Activated naive CD4-positive, alpha-beta T cell treated with anti-CD3 and anti-CD28 coated beads for 36 hours (primary cell): ENCODE measurements at regions of chr7 and their contacts with region 1.

Region 1: DNA sequence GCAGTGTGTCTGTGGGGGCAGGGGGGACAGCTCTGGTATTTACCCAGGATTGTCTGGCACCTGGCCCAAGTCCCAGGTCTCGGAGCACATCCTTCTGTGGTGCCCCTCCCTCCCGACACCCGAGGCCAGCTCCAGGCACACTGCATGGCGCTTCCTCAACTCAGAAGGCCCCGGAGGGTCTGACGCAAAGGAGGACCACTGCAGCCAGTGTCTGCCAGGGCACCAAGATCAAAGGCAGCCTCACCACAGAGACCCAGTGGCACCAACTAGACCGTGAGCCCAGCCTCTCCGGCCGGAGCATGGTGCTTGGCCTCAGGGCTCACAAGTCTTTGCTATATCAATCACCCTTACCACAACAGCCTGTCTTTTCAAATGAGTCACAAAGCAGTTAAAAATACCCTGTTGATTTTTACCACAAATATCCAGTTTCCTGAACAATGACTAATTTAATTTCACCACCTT is 99.3 kb upstream of the DDC start:
- DNase-seq: peak; percentile 47
- H3K4me3 Mint-ChIP-seq: no peak overlapping the region
- H3K27ac Mint-ChIP-seq: no peak overlapping the region
- H3K4me1 Mint-ChIP-seq: peaks cover 62% of the 10 kb centered on the region
- H3K27me3 Mint-ChIP-seq: no peaks in the 10 kb centered on the region

Region 2: DNA sequence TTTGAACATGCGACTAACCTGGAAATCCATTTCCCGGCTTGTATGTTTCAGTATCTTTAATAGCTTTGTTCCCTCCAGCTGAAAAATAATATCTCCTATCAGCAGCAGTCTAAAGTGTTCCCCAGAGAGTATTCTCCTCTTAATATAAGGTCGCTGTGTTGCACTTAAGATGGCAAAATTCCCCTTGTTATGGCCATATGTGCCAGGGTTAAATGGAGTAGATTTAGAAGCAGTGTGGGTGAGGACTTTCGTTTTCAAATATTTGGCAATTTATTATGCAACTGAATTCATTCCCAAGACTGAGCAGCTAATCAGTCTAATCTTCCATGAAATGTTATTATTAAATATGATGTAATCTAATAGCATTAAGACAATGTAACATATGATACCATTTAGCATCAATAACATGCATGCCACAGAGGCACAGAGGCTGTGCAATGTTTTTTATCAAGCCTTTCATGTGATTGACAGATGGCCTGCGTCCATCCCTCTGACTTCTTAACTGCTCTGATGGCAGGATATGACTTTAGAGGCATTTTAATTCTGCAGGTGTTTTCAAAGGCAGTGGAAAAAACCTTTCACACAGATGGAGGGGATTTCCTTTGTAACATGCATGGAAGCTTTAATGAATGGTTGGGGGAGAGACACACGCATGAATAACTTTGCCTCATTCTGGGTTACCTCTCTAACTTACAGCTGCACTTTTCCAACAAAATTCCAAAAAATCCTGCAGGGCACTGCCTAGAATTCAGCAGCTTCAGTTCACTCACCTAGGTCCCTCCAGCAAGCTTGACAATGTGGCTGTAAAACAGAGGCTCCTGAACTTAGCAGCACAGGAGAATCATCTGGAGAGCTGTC is 516.3 kb before region 1 on chr7:
- CTCF ChIA-PET with region 1: no interaction called
- intact Hi-C with region 1: loop called (anchors 5 kb)
- DNase-seq: peak; percentile 73
- H3K4me3 Mint-ChIP-seq: peak overlapping the region; percentile 34
- H3K27ac Mint-ChIP-seq: peak overlapping the region; percentile 91
- H3K4me1 Mint-ChIP-seq: peaks cover 91% of the 10 kb centered on the region
- H3K27me3 Mint-ChIP-seq: no peaks in the 10 kb centered on the region

Region 3: GRCh38 chr7:50182759-50183158 is 481.7 kb before region 1 on chr7:
- CTCF ChIA-PET with region 1: no interaction called
- intact Hi-C with region 1: no loop called
- DNase-seq: no peak
- H3K4me3 Mint-ChIP-seq: no peak overlapping the region
- H3K27ac Mint-ChIP-seq: no peak overlapping the region
- H3K4me1 Mint-ChIP-seq: no peaks in the 10 kb centered on the region
- H3K27me3 Mint-ChIP-seq: no peaks in the 10 kb centered on the region

Region 4: DNA sequence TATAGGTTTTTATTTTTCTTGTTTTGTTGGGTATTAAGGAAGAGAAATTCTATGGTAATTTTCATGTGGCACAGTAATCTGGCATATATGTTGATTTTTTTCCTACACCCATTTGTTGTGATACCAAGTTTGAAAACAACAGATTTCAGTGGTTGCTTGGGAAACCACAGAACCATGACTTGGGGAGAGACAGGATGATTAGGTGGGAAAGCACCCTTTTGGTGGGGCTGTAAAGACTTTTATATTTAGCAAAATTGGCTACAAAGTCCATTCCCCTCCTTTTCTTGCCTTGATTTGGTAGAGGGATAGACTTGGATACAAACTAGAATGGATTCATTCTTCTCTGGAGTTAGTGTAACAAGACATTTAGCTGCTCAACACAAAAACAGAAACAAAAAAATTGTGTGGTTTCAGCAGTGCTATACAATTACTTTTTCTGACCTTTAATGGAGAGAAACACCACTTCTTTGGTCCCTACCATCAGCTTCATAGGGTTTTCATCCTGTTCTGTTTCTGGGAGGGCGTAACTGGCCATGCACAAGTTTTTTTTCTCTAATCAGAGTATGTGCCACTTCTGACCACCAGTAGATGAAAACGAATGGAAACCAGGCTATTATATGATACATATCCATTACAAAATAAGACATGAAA is 267.0 kb before region 1 on chr7:
- CTCF ChIA-PET with region 1: no interaction called
- intact Hi-C with region 1: loop called (anchors 5 kb)
- DNase-seq: peak; percentile 60
- H3K4me3 Mint-ChIP-seq: no peak overlapping the region
- H3K27ac Mint-ChIP-seq: peak overlapping the region; percentile 78
- H3K4me1 Mint-ChIP-seq: peaks cover 81% of the 10 kb centered on the region
- H3K27me3 Mint-ChIP-seq: no peaks in the 10 kb centered on the region

Region 5: GRCh38 chr7:50610521-50611277 is 53.8 kb before region 1 on chr7:
- CTCF ChIA-PET with region 1: no interaction called
- intact Hi-C with region 1: loop called (anchors 1 kb)
- DNase-seq: peak; percentile 80
- H3K4me3 Mint-ChIP-seq: no peak overlapping the region
- H3K27ac Mint-ChIP-seq: no peak overlapping the region
- H3K4me1 Mint-ChIP-seq: peaks cover 26% of the 10 kb centered on the region
- H3K27me3 Mint-ChIP-seq: no peaks in the 10 kb centered on the region

Region 6: DNA sequence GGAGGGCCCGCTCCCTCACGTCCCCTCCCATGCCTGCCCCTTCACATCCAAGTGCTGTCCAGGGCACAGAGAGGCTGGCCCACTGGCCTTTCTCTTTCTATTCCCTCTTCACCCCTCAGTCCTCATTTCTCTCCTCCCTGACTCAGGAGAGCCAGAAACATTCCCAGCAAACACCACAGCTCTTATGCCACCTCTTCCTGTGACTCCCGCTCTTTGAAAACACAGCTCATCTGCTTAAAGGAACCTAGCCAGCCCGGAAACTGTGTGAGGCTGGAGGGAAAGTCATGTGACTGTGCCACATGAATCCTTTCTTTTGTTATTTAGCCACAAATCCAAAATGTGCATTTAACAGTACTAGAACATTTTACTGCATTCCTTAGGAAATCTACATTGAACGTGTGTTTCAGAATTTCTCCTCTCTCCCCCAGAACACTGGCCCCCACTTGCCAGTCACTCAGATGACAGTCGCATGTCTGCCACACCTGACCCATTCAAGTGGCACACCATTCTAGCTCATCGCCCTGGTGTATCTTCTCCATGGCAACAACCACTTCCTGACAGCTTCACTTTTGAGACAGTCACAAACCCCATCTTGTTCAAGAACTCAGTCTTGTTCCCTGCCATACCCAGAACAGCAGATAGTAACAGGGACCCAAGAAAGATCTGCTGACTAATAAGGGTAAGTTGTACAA is 75.4 kb after region 1 on chr7:
- CTCF ChIA-PET with region 1: no interaction called
- intact Hi-C with region 1: loop called (anchors 5 kb)
- DNase-seq: peak; percentile 84
- H3K4me3 Mint-ChIP-seq: peak overlapping the region; percentile 59
- H3K27ac Mint-ChIP-seq: peak overlapping the region; percentile 84
- H3K4me1 Mint-ChIP-seq: peaks cover 34% of the 10 kb centered on the region
- H3K27me3 Mint-ChIP-seq: no peaks in the 10 kb centered on the region

Region 7: DNA sequence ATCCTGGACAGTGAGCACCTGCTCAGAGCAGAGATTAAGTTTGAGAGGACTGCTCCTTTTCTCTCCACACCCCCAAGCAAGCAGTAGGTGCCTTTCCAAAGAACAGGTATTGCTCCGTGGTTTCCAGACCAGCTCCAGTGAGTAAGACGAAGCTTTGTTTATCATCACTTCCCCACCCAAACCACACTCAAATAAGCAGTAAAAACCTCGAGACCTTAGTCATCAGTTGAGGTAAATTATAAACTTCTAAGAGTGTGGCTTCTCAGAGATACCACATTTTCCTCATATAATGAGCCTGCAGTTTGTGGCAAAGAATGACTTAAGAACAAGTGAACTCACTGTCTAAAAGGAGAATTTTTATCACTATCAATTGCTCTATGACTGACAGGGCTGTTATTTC is 168.3 kb after region 1 on chr7:
- CTCF ChIA-PET with region 1: no interaction called
- intact Hi-C with region 1: loop called (anchors 2 kb)
- DNase-seq: peak; percentile 47
- H3K4me3 Mint-ChIP-seq: no peak overlapping the region
- H3K27ac Mint-ChIP-seq: peak overlapping the region; percentile 13
- H3K4me1 Mint-ChIP-seq: peaks cover 11% of the 10 kb centered on the region
- H3K27me3 Mint-ChIP-seq: peaks cover 10% of the 10 kb centered on the region